Activated CD8-positive, alpha-beta T cell treated with anti-CD3 and anti-CD28 coated beads, Interleukin-2, amount 10 ng/mL, durations not matched to agents 7 days and 5 days (primary cell): ENCODE measurements at regions of chr1 and their contacts with region 1.

Region 1: DNA sequence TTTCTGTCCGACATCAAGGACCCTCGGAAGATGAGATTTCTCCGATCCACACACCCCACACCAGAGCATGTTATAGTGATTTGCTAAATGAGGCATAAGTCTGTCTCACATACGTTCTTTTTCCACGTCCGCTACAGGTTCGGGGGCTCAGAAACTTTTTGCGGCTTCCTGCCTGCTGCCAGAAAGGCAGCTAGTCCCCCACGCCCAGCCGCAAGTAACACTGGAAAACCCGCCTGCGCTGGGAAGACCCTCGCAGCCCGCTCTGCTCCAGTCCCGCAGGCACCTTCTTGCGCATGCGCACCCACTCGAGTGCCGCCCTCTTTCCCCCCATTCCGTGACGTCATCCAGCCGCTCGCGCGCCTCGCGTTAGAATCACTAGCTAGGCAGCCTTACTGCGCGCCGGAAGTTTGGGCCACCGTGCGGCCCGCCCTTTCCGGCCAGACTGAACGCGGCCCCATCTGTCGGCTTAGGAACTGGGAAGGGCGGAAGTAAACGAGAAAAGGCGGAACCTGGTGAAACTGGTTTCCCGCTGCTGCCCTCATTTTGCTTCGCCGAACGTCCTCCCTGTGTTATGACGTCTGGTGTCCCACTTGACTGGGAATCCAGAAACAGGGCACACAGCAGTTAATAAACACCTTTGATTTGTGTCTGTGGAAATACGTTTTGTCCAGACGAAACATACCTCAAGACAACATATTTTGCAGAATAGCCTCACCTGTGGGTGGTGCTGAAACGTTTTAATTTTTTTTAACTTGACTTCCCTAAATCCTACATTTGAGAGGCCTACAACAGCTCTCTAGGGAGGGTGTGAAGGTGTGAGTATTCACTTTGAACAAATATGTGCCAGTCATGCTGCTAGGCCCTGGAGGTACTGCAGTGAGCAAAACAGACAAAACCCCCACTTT is at the start of gene C1orf74:
- DNase-seq: peak; percentile 99
- ATAC-seq: peak; percentile 99
- H3K4me3 Mint-ChIP-seq: peak within 1 kb of the TSS; percentile 94
- H3K27ac Mint-ChIP-seq: peak within 1 kb of the TSS; percentile 99
- H3K4me1 Mint-ChIP-seq: peaks cover 50% of the 10 kb centered on the region
- H3K27me3 Mint-ChIP-seq: no peaks in the 10 kb centered on the region
- total RNA-seq, gene C1orf74: 2.5 to 2.6 TPM

Region 2: GRCh38 chr1:209769171-209769904 is 15.2 kb before region 1 on chr1:
- CTCF ChIA-PET with region 1: interaction called, 8 read pairs
- POLR2A ChIA-PET with region 1: interaction called, 51 read pairs
- DNase-seq: peak; percentile 89
- ATAC-seq: peak; percentile 58
- H3K4me3 Mint-ChIP-seq: no peak overlapping the region
- H3K27ac Mint-ChIP-seq: no peak overlapping the region
- H3K4me1 Mint-ChIP-seq: peaks cover 36% of the 10 kb centered on the region
- H3K27me3 Mint-ChIP-seq: no peaks in the 10 kb centered on the region

Region 3: GRCh38 chr1:209835782-209836298 is 51.3 kb after region 1 on chr1:
- CTCF ChIA-PET with region 1: no interaction called
- POLR2A ChIA-PET with region 1: no interaction called
- DNase-seq: no peak
- ATAC-seq: no peak
- H3K4me3 Mint-ChIP-seq: no peak overlapping the region
- H3K27ac Mint-ChIP-seq: no peak overlapping the region
- H3K4me1 Mint-ChIP-seq: peaks cover 3% of the 10 kb centered on the region
- H3K27me3 Mint-ChIP-seq: no peaks in the 10 kb centered on the region